ENCODE measurements at regions of chr20 and their contacts with region 1.

Region 1: DNA sequence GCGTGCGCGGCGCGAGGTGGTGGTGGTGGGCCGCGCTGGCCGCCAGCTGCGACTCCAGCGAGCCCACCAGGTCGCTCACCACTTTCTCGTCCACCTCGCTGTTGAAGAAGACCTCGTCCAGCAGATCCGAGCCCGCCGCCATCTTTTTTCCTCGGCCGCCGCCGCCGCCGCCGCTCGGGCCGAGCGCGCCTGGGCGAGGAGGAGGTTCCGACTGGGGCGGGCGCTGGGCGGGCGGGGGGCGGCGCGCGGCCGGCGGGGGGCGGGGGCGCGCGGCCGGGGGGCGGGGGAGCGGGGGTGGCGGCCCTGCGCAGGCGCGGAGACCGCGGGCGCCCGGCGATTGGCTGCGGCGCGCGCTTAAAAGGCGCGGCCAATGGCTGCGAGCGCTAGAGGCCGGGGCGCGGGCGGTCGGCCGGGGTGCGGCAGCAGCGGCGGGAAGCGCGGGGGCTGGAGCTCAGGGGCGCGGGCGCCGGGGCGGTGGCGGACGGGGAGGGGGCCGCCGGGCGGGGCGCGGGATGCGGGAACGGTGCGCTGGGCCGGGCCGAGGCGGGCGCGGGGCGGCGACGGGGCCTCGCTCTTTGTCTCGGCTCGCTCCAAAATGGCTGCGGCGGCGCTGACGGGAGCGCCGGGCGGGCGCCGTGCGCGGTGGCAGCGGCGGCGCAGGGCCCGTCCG is at the start of gene TAF4:
- DNase-seq: peak; percentile 81 to 92
- H3K4me3 ChIP-seq: peak within 1 kb of the TSS; percentile 65 to 79 (median 71)
- H3K27ac ChIP-seq: peak within 1 kb of the TSS; percentile 90 to 95 (median 91)
- H3K4me1 ChIP-seq: peaks cover 35 to 49% (median 41%) of the 10 kb centered on the region in 4 donors
- H3K27me3 ChIP-seq: no peaks in the 10 kb centered on the region
- CTCF ChIP-seq: no peak
- EP300 ChIP-seq: no peak
- POLR2A ChIP-seq: no peak
- total RNA-seq, gene TAF4: 9.5 to 33.9 (median 22.6) TPM

Region 2: GRCh38 chr20:62136283-62137091 is 70.7 kb after region 1 on chr20:
- intact Hi-C with region 1: loop called (anchors 5 kb)
- DNase-seq: peak; percentile 77 to 90
- H3K4me3 ChIP-seq: no peak overlapping the region
- H3K27ac ChIP-seq: peak overlapping the region in 2 of 5 donors; percentile 19 to 25
- H3K4me1 ChIP-seq: peaks cover 18 to 67% (median 26%) of the 10 kb centered on the region in 4 donors
- H3K27me3 ChIP-seq: no peaks in the 10 kb centered on the region
- CTCF ChIP-seq: peak in 5 of 7 experiments; percentile 25 to 80 (median 66)
- EP300 ChIP-seq: no peak
- POLR2A ChIP-seq: no peak

Region 3: DNA sequence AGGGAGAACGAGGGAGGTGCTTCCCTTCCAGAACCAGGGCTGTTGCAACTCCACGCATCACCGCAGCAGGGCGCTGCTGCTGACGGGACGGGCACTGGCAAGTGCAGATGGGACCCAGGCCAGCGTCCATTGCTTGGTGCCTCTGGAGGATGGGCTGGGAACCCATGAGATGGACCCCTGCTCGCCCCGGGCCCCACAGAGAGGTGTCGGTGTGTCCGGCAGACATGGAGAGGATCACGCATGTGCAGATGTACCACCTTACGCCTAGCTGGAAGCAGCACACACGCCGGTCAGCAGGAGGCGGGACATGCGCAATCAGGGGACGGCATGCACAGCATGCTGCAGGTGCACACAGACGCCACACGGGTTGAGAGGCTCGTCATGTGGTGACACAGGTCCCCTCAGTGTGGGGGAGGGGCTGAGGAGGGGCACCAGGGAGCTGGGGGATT is 335.6 kb after region 1 on chr20:
- intact Hi-C with region 1: loop called (anchors 5 kb)
- DNase-seq: no peak
- H3K4me3 ChIP-seq: no peak overlapping the region
- H3K27ac ChIP-seq: no peak overlapping the region
- H3K4me1 ChIP-seq: peaks cover 13 to 24% (median 19%) of the 10 kb centered on the region in 4 donors
- H3K27me3 ChIP-seq: no peaks in the 10 kb centered on the region
- CTCF ChIP-seq: no peak
- EP300 ChIP-seq: no peak
- POLR2A ChIP-seq: no peak